Activated CD4-positive, alpha-beta memory T cell treated with anti-CD3 and anti-CD28 coated beads for 36 hours (primary cell): ENCODE measurements at regions of chr17 and their contacts with region 1.

Region 1: GRCh38 chr17:700504-701094 is 14.0 kb downstream of the VPS53 start:
- DNase-seq: no peak
- H3K4me3 Mint-ChIP-seq: no peak overlapping the region
- H3K27ac Mint-ChIP-seq: no peak overlapping the region
- H3K4me1 Mint-ChIP-seq: peaks cover 4% of the 10 kb centered on the region
- H3K27me3 Mint-ChIP-seq: no peaks in the 10 kb centered on the region

Region 2: GRCh38 chr17:681738-682529 is 18.7 kb before region 1 on chr17:
- CTCF ChIA-PET with region 1: interaction called, 15 read pairs
- POLR2A ChIA-PET with region 1: no interaction called
- intact Hi-C with region 1: no loop called
- DNase-seq: no peak
- H3K4me3 Mint-ChIP-seq: no peak overlapping the region
- H3K27ac Mint-ChIP-seq: no peak overlapping the region
- H3K4me1 Mint-ChIP-seq: peaks cover 17% of the 10 kb centered on the region
- H3K27me3 Mint-ChIP-seq: no peaks in the 10 kb centered on the region

Region 3: DNA sequence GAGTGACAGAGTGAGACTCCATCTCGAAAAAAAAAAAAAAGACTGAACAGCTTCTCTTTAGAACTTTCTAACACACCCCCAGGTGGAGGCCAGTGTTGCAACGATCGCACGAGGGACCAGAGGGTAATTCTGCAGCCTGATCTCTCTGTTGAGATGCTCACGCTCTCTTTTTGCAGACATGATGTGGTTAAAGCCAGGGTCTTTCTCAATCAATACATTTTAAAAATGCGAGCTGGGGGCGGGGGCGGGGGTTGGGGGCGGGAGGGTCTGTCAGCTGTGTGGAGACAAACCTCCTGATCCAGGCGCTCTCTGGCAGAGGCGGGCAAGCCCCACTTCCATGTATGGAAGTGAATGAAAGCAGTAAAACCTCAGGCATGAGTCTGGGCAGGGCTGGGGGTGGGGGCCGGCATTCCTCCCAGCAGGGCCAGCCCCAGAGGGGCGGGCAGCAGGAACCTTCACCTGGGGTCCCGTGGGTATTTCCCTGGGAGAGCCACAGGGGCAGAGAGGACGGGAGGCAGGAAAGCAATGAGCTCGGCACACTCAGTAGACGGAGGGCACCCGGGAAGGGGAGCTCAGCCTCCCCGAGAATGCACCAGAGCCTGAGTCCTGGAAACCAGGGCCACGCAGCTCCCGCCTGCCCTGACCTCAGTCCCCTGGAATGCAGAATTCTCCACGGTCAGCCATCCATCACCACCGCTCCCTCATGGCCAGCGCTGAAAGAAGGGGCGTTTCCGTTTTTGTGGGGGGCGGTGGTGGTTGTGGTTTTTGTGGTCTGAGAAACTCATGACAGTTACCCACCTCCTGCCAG is 250.9 kb after region 1 on chr17:
- CTCF ChIA-PET with region 1: no interaction called
- POLR2A ChIA-PET with region 1: no interaction called
- intact Hi-C with region 1: no loop called
- DNase-seq: no peak
- H3K4me3 Mint-ChIP-seq: no peak overlapping the region
- H3K27ac Mint-ChIP-seq: no peak overlapping the region
- H3K4me1 Mint-ChIP-seq: no peaks in the 10 kb centered on the region
- H3K27me3 Mint-ChIP-seq: peaks cover 15% of the 10 kb centered on the region